Caco-2 (cell line): ENCODE measurements at regions of chr13 and their contacts with region 1.

Region 1: GRCh38 chr13:86870444-86870843 is 800.7 kb upstream of the SLITRK5 start:
- DNase-seq: no peak
- H3K4me3 ChIP-seq: no peak overlapping the region
- H3K4me3 Mint-ChIP-seq: no peak overlapping the region
- H3K27ac Mint-ChIP-seq: no peak overlapping the region
- H3K4me1 ChIP-seq: no peaks in the 10 kb centered on the region
- H3K4me1 Mint-ChIP-seq: no peaks in the 10 kb centered on the region
- H3K27me3 ChIP-seq: no peaks in the 10 kb centered on the region
- H3K27me3 Mint-ChIP-seq: peaks cover 2% of the 10 kb centered on the region
- CTCF ChIP-seq: peak; percentile 56 to 63

Region 2: GRCh38 chr13:86933676-86934075 is 63.2 kb after region 1 on chr13:
- CTCF ChIA-PET with region 1: no interaction called
- POLR2A ChIA-PET with region 1: no interaction called
- intact Hi-C with region 1: loop called (anchors 2 kb)
- DNase-seq: no peak
- H3K4me3 ChIP-seq: no peak overlapping the region
- H3K4me3 Mint-ChIP-seq: no peak overlapping the region
- H3K27ac Mint-ChIP-seq: no peak overlapping the region
- H3K4me1 ChIP-seq: no peaks in the 10 kb centered on the region; the same call in 1 of the 2 replicates
- H3K4me1 Mint-ChIP-seq: peaks cover 7% of the 10 kb centered on the region
- H3K27me3 ChIP-seq: no peaks in the 10 kb centered on the region
- H3K27me3 Mint-ChIP-seq: no peaks in the 10 kb centered on the region
- CTCF ChIP-seq: no peak

Region 3: DNA sequence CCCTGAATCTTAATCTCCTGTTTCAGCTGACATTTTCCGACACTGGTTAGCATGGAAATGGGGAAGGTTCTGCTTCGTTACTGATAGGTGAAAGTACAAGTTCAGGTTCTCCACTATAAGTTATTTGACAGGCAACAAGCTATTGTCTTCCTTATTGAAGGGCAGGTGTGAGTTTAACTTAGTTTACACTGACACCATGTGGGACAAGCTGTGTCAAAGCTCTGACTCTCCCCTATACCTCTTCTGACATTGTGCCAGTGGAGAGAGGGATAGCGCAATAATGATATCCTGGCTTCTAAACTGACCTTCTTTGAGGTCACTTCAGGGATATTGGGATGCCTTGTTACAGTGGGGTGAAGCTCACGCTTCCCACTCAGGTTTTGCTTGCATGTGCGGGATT is 213.7 kb after region 1 on chr13:
- CTCF ChIA-PET with region 1: no interaction called
- POLR2A ChIA-PET with region 1: no interaction called
- intact Hi-C with region 1: loop called (anchors 2 kb)
- DNase-seq: no peak
- H3K4me3 ChIP-seq: no peak overlapping the region
- H3K4me3 Mint-ChIP-seq: no peak overlapping the region
- H3K27ac Mint-ChIP-seq: no peak overlapping the region
- H3K4me1 ChIP-seq: no peaks in the 10 kb centered on the region
- H3K4me1 Mint-ChIP-seq: no peaks in the 10 kb centered on the region
- H3K27me3 ChIP-seq: no peaks in the 10 kb centered on the region
- H3K27me3 Mint-ChIP-seq: no peaks in the 10 kb centered on the region
- CTCF ChIP-seq: no peak

Region 4: DNA sequence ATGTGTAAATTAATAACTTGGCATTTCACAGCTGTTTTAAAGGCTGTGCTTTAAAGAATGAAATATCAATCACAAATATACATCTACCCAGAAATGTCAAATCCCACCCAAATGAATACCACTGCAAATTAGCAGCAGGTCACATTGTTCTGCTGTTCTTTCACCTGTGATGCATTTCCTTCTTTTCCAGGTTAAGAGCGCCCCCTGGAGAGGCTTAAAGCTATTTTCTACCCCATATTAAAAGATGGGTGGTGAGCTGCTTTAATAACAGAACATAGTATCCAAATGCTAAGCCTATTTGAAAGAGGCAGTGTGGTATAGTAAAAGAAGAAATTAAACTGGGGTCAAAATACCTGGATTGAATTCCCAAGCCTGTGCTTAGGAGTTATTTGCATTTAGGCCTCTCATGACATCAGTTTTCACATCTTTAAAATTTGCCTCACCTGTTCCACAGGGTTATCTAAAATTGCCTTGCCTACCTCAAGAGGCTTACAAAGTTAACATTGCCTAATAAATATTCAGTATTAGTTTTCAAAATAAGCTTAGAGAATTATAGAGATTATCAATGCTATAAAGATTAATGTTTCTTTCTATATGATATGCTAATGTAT is 403.9 kb after region 1 on chr13:
- CTCF ChIA-PET with region 1: interaction called, 12 read pairs
- POLR2A ChIA-PET with region 1: no interaction called
- intact Hi-C with region 1: loop called (anchors 1 kb)
- DNase-seq: peak; percentile 45 to 64
- H3K4me3 ChIP-seq: no peak overlapping the region
- H3K4me3 Mint-ChIP-seq: no peak overlapping the region
- H3K27ac Mint-ChIP-seq: no peak overlapping the region
- H3K4me1 ChIP-seq: no peaks in the 10 kb centered on the region
- H3K4me1 Mint-ChIP-seq: no peaks in the 10 kb centered on the region
- H3K27me3 ChIP-seq: no peaks in the 10 kb centered on the region
- H3K27me3 Mint-ChIP-seq: peaks cover 4% of the 10 kb centered on the region
- CTCF ChIP-seq: peak; percentile 65 to 78